Panc1 (cell line): ENCODE measurements at regions of chr2 and their contacts with region 1.

Region 1: DNA sequence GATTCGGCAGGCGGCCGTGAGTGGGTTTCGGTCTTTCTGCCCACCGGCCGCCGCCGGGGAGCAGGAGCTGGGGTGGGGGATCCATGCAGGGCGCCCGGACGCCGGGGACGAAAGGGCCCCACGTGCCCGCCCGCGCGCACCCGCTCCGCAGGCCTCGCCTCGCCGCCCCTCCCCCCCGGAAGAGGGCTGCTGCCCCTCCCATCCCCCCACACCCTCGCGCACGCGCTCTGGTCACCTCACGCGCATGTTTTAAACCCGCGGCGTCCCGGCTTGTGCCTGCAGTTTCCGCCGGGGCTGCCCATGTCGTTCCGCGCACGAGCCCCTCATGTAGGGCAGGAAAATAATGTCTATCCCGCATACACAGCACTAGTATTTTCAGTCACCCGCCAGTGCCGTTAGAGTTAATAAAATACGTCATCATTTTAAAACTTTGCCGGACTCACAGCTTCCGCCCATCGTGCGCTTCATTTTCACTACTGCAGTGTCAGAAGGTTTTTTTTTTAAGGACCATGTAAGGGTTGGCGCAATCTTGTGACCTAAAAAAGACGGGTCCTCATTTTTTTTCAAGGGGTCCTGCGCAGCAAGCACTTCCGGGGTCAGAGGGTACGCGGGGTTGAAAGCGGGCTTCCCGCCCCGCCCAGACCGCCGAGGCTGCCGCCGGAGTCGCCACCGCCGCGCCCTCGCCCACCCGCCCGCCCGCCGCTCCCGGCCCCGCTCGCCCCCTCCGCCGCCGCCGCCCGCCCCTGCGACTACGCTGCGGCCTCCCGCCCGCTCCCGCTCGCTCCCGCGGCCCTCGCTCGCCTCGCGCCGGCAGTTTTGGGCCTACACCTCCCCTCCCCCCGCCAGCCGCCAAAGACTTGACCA is at the start of gene PCBP1:
- DNase-seq: peak; percentile 84
- ATAC-seq: peak; percentile 78
- H3K4me3 ChIP-seq: peak within 1 kb of the TSS; percentile 75 to 94
- H3K27ac ChIP-seq: peak within 1 kb of the TSS; percentile 100
- H3K4me1 ChIP-seq: peaks cover 29% of the 10 kb centered on the region
- H3K27me3 ChIP-seq: no peaks in the 10 kb centered on the region
- CTCF ChIP-seq: no peak
- total RNA-seq, gene PCBP1: 276 TPM

Region 2: GRCh38 chr2:69816923-69817542 is 270.0 kb before region 1 on chr2:
- CTCF ChIA-PET with region 1: no interaction called
- POLR2A ChIA-PET with region 1: no interaction called
- in situ Hi-C with region 1: no loop called
- intact Hi-C with region 1: no loop called
- DNase-seq: peak; percentile 75
- ATAC-seq: peak; percentile 85; the same call in 1 of the 2 replicates
- H3K4me3 ChIP-seq: no peak overlapping the region
- H3K27ac ChIP-seq: no peak overlapping the region
- H3K4me1 ChIP-seq: no peaks in the 10 kb centered on the region
- H3K27me3 ChIP-seq: no peaks in the 10 kb centered on the region
- CTCF ChIP-seq: peak; percentile 81; the same call in 1 of the 2 replicates

Region 3: GRCh38 chr2:70062268-70062667 is 24.8 kb before region 1 on chr2:
- CTCF ChIA-PET with region 1: no interaction called
- POLR2A ChIA-PET with region 1: no interaction called
- in situ Hi-C with region 1: no loop called
- intact Hi-C with region 1: no loop called
- DNase-seq: no peak
- ATAC-seq: no peak
- H3K4me3 ChIP-seq: no peak overlapping the region
- H3K27ac ChIP-seq: no peak overlapping the region
- H3K4me1 ChIP-seq: no peaks in the 10 kb centered on the region
- H3K27me3 ChIP-seq: no peaks in the 10 kb centered on the region
- CTCF ChIP-seq: no peak

Region 4: DNA sequence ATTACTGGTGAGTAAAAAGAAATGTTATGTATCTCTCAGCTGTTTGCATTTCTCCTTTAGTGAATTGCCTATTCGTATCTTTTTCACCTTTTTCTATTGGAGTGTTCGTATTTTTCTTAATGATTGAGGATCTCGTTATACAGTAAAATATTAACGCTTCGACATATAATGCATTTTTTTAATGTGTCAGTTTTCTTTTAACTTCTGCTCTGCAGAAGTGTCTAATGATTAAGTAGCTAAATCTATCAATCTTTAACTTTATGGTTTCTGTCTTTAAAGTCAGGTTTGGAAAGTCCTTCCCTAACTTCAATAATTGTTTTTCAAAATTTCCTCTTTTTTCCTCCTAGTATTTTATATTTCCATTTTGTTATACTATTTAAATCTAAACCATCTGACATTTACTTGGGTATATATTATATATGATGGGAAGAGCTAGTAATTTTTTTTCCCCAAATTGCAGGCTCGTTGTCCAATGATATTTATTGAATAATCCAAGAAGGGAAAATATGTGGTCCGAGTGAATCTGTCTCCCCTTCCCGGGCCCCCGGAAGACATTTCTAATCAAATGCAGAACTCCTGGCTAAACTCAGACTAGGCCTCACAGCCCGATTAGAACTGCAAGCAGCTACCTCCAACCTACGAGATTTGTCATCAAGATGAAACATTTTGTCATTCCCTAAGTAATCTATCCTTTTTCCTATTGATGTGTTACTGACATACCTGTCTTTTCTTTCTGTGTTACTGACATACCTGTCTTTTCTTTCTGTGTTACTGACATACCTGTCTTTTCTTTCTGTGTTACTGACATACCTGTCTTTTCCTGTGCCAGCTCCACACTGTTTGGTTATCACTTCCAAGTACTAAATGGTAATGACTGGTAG is 17.4 kb after region 1 on chr2:
- CTCF ChIA-PET with region 1: no interaction called
- POLR2A ChIA-PET with region 1: interaction called, 12 read pairs
- in situ Hi-C with region 1: no loop called
- intact Hi-C with region 1: no loop called
- DNase-seq: no peak
- ATAC-seq: no peak
- H3K4me3 ChIP-seq: no peak overlapping the region
- H3K27ac ChIP-seq: peak overlapping the region; percentile 56
- H3K4me1 ChIP-seq: peaks cover 23% of the 10 kb centered on the region
- H3K27me3 ChIP-seq: no peaks in the 10 kb centered on the region
- CTCF ChIP-seq: no peak

Region 5: DNA sequence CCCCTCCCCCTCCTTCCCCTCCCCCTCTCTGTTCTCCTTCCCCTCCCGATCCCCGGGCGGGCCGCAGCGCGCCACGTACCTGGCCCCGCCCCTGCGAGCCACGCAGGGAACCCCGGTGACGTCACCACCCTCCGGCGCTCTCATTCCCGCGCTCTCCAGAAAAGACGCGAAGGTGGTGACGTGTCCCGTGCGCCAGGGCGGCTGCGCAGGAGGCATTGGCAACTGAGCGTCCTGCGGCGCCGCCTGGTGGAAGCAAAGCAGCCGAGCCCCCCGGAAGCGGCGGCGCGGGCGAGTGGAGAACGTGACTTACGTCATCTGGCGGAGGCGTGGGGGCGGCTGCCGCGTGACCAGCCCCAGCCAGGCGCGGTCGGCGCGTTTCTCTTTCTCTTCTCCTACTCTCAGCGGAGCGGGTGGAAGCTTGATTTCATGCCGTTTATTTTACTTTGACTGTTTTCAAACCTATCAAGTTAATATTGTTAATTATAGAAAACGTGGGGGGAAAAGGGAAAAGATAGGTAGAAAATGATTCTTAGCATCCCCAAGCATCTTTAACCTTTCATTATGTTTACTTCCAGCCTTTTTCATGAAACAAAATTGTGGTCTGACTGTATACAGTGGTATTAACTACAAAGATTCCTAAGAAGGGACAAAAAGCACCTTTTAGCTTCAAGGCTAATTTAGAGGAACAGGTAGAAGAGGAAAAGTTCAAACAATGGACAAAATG is 55.7 kb after region 1 on chr2:
- CTCF ChIA-PET with region 1: no interaction called
- POLR2A ChIA-PET with region 1: no interaction called
- in situ Hi-C with region 1: no loop called
- intact Hi-C with region 1: loop called (anchors 5 kb)
- DNase-seq: peak; percentile 95
- ATAC-seq: peak; percentile 89
- H3K4me3 ChIP-seq: peak overlapping the region; percentile 30 to 46
- H3K27ac ChIP-seq: peak overlapping the region; percentile 99
- H3K4me1 ChIP-seq: peaks cover 21% of the 10 kb centered on the region
- H3K27me3 ChIP-seq: no peaks in the 10 kb centered on the region
- CTCF ChIP-seq: peak; percentile 98